ENCODE measurements at regions of chr20 and their contacts with region 1.

Region 1: GRCh38 chr20:58650776-58651558 is at the start of gene STX16:
- DNase-seq: peak; percentile 91
- ATAC-seq: peak; percentile 89
- H3K4me3 ChIP-seq: peak within 1 kb of the TSS; percentile 78
- H3K27ac ChIP-seq: peak within 1 kb of the TSS; percentile 90
- H3K4me1 ChIP-seq: peaks cover 8% of the 10 kb centered on the region
- H3K27me3 ChIP-seq: no peaks in the 10 kb centered on the region
- CTCF ChIP-seq: peak; percentile 53
- POLR2A ChIP-seq: peak; percentile 72; the same call in 1 of the 2 replicates
- RAD21 ChIP-seq: peak; percentile 48
- total RNA-seq, gene STX16: 26.9 and 29.4 TPM in 2 replicates

Region 2: GRCh38 chr20:58160451-58161061 is 490.4 kb before region 1 on chr20:
- CTCF ChIA-PET with region 1: no interaction called
- POLR2A ChIA-PET with region 1: no interaction called
- dilution Hi-C with region 1: no loop called
- in situ Hi-C with region 1: no loop called
- intact Hi-C with region 1: no loop called
- DNase-seq: peak; percentile 17
- ATAC-seq: peak; percentile 81
- H3K4me3 ChIP-seq: no peak overlapping the region
- H3K27ac ChIP-seq: no peak overlapping the region
- H3K4me1 ChIP-seq: no peaks in the 10 kb centered on the region; the same call in 1 of the 2 replicates
- H3K27me3 ChIP-seq: peaks cover 1% of the 10 kb centered on the region; the same call in 1 of the 2 replicates
- CTCF ChIP-seq: no peak
- POLR2A ChIP-seq: no peak
- RAD21 ChIP-seq: no peak

Region 3: GRCh38 chr20:58309575-58310290 is 341.2 kb before region 1 on chr20 and contains the start of gene RAB22A:
- CTCF ChIA-PET with region 1: no interaction called
- POLR2A ChIA-PET with region 1: no interaction called
- dilution Hi-C with region 1: no loop called
- in situ Hi-C with region 1: no loop called
- intact Hi-C with region 1: loop called (anchors 10 kb)
- DNase-seq: peak; percentile 77
- ATAC-seq: peak; percentile 94
- H3K4me3 ChIP-seq: peak within 1 kb of the TSS; percentile 98
- H3K27ac ChIP-seq: peak within 1 kb of the TSS; percentile 75
- H3K4me1 ChIP-seq: peaks cover 4% of the 10 kb centered on the region; the same call in 1 of the 2 replicates
- H3K27me3 ChIP-seq: no peaks in the 10 kb centered on the region
- CTCF ChIP-seq: no peak
- POLR2A ChIP-seq: peak; percentile 93
- RAD21 ChIP-seq: peak; percentile 19; the same call in 1 of the 2 replicates
- total RNA-seq, gene RAB22A: 8.2 and 16.1 TPM in 2 replicates

Region 4: GRCh38 chr20:58481481-58482021 is 169.4 kb before region 1 on chr20:
- CTCF ChIA-PET with region 1: interaction called, 6 read pairs
- POLR2A ChIA-PET with region 1: no interaction called
- dilution Hi-C with region 1: no loop called
- in situ Hi-C with region 1: no loop called
- intact Hi-C with region 1: loop called (anchors 5 kb)
- DNase-seq: no peak
- ATAC-seq: peak; percentile 56
- H3K4me3 ChIP-seq: no peak overlapping the region
- H3K27ac ChIP-seq: no peak overlapping the region
- H3K4me1 ChIP-seq: no peaks in the 10 kb centered on the region
- H3K27me3 ChIP-seq: no peaks in the 10 kb centered on the region
- CTCF ChIP-seq: peak; percentile 55
- POLR2A ChIP-seq: no peak
- RAD21 ChIP-seq: peak; percentile 79

Region 5: GRCh38 chr20:58571693-58572427 is 79.1 kb before region 1 on chr20:
- CTCF ChIA-PET with region 1: no interaction called
- POLR2A ChIA-PET with region 1: no interaction called
- dilution Hi-C with region 1: no loop called
- in situ Hi-C with region 1: no loop called
- intact Hi-C with region 1: loop called (anchors 5 kb)
- DNase-seq: peak; percentile 88
- ATAC-seq: peak; percentile 89
- H3K4me3 ChIP-seq: no peak overlapping the region
- H3K27ac ChIP-seq: peak overlapping the region; percentile 87
- H3K4me1 ChIP-seq: peaks cover 13% of the 10 kb centered on the region
- H3K27me3 ChIP-seq: peaks cover 2% of the 10 kb centered on the region; the same call in 1 of the 2 replicates
- CTCF ChIP-seq: no peak
- POLR2A ChIP-seq: no peak
- RAD21 ChIP-seq: no peak; the same call in 1 of the 2 replicates

Region 6: GRCh38 chr20:58682662-58683531 is 31.9 kb after region 1 on chr20:
- CTCF ChIA-PET with region 1: no interaction called
- POLR2A ChIA-PET with region 1: no interaction called
- dilution Hi-C with region 1: no loop called
- in situ Hi-C with region 1: no loop called
- intact Hi-C with region 1: no loop called
- DNase-seq: peak; percentile 70
- ATAC-seq: peak; percentile 48
- H3K4me3 ChIP-seq: no peak overlapping the region
- H3K27ac ChIP-seq: no peak overlapping the region
- H3K4me1 ChIP-seq: peaks cover 2% of the 10 kb centered on the region; the same call in 1 of the 2 replicates
- H3K27me3 ChIP-seq: no peaks in the 10 kb centered on the region
- CTCF ChIP-seq: no peak
- POLR2A ChIP-seq: no peak
- RAD21 ChIP-seq: no peak

Region 7: GRCh38 chr20:58775371-58775770 is 124.4 kb after region 1 on chr20:
- CTCF ChIA-PET with region 1: no interaction called
- POLR2A ChIA-PET with region 1: no interaction called
- dilution Hi-C with region 1: no loop called
- in situ Hi-C with region 1: no loop called
- intact Hi-C with region 1: no loop called
- DNase-seq: no peak
- ATAC-seq: no peak
- H3K4me3 ChIP-seq: no peak overlapping the region
- H3K27ac ChIP-seq: no peak overlapping the region
- H3K4me1 ChIP-seq: no peaks in the 10 kb centered on the region
- H3K27me3 ChIP-seq: peaks cover 41% of the 10 kb centered on the region
- CTCF ChIP-seq: no peak
- POLR2A ChIP-seq: no peak
- RAD21 ChIP-seq: no peak

Region 8: DNA sequence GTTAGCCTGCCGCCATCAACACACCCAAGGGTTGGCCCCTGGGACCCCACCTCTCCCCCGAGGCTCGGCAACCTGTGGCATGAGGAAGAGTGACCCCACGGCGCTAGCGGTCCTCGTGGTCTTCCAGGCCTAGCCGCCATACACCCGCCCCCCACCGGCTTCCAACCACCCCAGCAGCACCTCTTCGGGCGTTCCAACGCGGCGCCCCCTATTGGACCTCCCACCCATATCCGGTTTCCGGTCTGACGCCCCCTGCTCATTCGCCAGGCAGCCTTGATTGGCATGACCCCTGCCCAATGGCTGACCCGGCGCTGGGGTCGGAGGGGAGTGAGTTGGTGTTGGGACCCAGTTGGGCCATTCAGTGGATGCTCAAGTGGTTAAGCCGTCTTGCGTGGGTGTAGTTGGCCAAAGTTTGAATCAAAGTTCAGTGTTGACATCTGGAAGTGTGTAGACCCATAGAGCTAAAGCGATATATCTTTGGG is 199.8 kb after region 1 on chr20 and contains the start of gene GNAS-AS1:
- CTCF ChIA-PET with region 1: no interaction called
- POLR2A ChIA-PET with region 1: no interaction called
- dilution Hi-C with region 1: no loop called
- in situ Hi-C with region 1: no loop called
- intact Hi-C with region 1: loop called (anchors 1 kb)
- DNase-seq: peak; percentile 87
- ATAC-seq: peak; percentile 89
- H3K4me3 ChIP-seq: peak within 1 kb of the TSS; percentile 88
- H3K27ac ChIP-seq: peak within 1 kb of the TSS; percentile 7; the same call in 1 of the 2 replicates
- H3K4me1 ChIP-seq: peaks cover 2% of the 10 kb centered on the region; the same call in 1 of the 2 replicates
- H3K27me3 ChIP-seq: peaks cover 36% of the 10 kb centered on the region
- CTCF ChIP-seq: no peak
- POLR2A ChIP-seq: no peak
- RAD21 ChIP-seq: no peak
- total RNA-seq, gene GNAS-AS1: 0.54 and 0.83 TPM in 2 replicates